A673 (cell line): ENCODE measurements at regions of chr9 and their contacts with region 1.

Region 1: DNA sequence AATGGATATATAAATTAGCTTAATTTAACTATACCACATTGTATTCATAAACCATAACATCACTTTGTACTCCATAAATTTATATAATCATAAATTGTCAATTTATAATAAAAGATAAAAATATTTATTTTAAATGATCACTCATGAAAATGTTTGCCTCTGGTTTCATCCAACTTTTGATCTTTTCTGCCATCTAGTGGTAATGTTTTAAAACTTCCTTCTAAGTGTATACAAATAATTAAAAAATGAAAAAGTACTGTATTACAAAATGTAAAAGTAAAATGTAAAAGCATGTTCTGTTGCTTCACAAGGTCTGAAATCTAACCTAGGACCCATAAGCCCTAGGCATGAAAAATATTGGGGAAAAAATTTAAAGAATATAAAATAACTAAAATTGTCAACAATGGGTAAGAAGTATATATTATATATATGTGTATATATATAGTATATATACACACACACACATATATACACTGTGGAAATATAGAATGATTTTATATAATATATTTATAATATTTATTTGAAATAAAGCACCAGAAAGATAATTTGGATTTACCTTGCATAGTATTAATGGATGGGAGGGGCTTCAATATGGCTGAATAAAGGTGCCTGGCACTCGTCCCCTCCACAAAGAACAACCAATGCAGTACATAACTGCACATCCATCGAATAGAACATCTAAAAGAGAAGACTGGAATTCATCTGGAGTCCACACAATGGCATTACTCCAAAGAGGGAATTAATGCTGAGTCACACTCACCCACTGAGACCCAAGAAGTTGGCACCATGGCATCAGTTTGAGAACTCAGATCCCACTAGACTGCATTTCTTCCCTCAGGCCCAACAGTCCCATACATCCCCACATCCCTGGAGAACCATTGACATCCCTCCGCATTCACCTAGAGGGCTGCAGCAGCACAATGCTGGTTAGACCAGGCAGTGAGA is 32.5 kb downstream of the ANXA1 start:
- DNase-seq: peak; percentile 74
- H3K4me3 ChIP-seq: no peak overlapping the region
- H3K27ac ChIP-seq: no peak overlapping the region
- H3K4me1 ChIP-seq: peaks cover 49% of the 10 kb centered on the region
- H3K27me3 ChIP-seq: no peaks in the 10 kb centered on the region
- CTCF ChIP-seq: peak; percentile 66

Region 2: DNA sequence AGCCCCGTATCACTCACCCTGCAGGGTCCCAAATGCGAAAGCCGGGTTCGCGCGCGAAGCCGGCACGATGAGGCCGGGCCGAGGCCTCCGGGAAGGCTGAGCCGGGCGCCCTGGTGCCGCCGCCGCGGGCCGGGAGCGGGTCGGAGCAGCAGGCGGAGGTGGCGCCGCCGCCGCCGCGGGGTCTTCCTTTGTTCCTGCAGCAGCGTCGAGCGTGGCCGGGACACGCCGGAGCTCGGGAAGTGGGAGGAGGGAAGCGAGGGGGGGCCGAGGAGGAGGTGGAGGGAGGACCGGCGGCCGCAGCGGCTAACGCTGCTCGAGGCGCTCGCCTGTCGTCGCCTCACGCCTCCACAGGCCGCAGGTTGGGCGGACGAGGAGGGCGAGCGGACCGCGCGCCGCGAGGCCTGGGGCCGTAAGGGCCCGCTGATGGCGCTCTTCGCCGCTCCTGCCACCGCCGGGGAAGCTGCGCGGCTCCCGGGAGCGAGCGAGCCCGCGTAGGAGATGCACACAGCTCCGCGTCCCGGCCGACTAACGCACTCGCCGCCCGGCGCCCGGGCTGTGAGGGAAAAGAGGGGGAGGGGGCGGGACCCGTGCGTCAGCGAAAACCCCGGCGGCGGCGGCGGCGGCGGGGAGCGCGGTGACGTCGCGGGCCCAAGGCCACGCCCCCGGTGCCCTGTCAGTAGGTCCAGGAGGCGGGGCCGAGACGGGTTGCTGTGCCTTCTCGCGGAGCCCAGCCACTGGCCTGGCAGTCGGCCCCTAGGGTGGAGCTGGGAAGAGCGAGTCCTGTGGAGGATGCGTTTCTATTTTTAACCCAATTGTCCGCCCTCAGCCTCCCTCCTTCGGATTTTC is 819.3 kb before region 1 on chr9 and contains the start of gene ZFAND5:
- CTCF ChIA-PET with region 1: no interaction called
- POLR2A ChIA-PET with region 1: no interaction called
- intact Hi-C with region 1: loop called (anchors 5 kb)
- DNase-seq: peak; percentile 97
- H3K4me3 ChIP-seq: peak within 1 kb of the TSS; percentile 95
- H3K27ac ChIP-seq: peak within 1 kb of the TSS; percentile 97
- H3K4me1 ChIP-seq: peaks cover 24% of the 10 kb centered on the region
- H3K27me3 ChIP-seq: no peaks in the 10 kb centered on the region
- CTCF ChIP-seq: no peak
- total RNA-seq, gene ZFAND5: 169 and 194 TPM in 2 replicates

Region 3: DNA sequence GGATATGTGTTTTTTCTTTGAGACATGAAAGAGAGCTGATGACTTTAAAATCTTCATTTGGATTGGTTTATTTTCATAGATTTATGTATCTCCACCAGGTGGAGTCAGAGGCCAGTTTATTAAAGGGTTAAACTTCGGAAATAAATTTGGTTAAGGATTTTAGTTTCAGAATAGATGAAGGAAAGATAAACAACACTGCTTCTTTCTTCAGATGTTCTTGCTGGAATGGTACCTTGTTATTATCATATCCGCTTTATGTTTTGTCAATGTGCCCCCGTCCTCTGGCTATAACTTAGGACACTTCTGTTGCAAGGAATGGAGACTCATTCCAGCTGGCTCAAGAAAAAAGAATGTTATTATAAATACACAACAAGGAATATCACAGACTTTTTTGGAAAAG is 312.5 kb before region 1 on chr9:
- CTCF ChIA-PET with region 1: interaction called, 4 read pairs
- POLR2A ChIA-PET with region 1: no interaction called
- intact Hi-C with region 1: loop called (anchors 2 kb)
- DNase-seq: peak; percentile 56
- H3K4me3 ChIP-seq: no peak overlapping the region
- H3K27ac ChIP-seq: no peak overlapping the region
- H3K4me1 ChIP-seq: peaks cover 6% of the 10 kb centered on the region
- H3K27me3 ChIP-seq: no peaks in the 10 kb centered on the region
- CTCF ChIP-seq: peak; percentile 67

Region 4: GRCh38 chr9:73038613-73039012 is 145.6 kb before region 1 on chr9:
- CTCF ChIA-PET with region 1: no interaction called
- POLR2A ChIA-PET with region 1: no interaction called
- intact Hi-C with region 1: loop called (anchors 5 kb)
- DNase-seq: no peak
- H3K4me3 ChIP-seq: no peak overlapping the region
- H3K27ac ChIP-seq: no peak overlapping the region
- H3K4me1 ChIP-seq: peaks cover 17% of the 10 kb centered on the region
- H3K27me3 ChIP-seq: no peaks in the 10 kb centered on the region
- CTCF ChIP-seq: no peak

Region 5: GRCh38 chr9:73151653-73152542 is 32.3 kb before region 1 on chr9 and contains the start of gene ANXA1:
- CTCF ChIA-PET with region 1: no interaction called
- POLR2A ChIA-PET with region 1: no interaction called
- intact Hi-C with region 1: loop called (anchors 2 kb)
- DNase-seq: peak; percentile 81
- H3K4me3 ChIP-seq: peak within 1 kb of the TSS; percentile 65
- H3K27ac ChIP-seq: peak within 1 kb of the TSS; percentile 90
- H3K4me1 ChIP-seq: peaks cover 61% of the 10 kb centered on the region
- H3K27me3 ChIP-seq: no peaks in the 10 kb centered on the region
- CTCF ChIP-seq: no peak
- total RNA-seq, gene ANXA1: 338 and 430 TPM in 2 replicates